ENCODE measurements at regions of chr2 and their contacts with region 1.

Region 1: DNA sequence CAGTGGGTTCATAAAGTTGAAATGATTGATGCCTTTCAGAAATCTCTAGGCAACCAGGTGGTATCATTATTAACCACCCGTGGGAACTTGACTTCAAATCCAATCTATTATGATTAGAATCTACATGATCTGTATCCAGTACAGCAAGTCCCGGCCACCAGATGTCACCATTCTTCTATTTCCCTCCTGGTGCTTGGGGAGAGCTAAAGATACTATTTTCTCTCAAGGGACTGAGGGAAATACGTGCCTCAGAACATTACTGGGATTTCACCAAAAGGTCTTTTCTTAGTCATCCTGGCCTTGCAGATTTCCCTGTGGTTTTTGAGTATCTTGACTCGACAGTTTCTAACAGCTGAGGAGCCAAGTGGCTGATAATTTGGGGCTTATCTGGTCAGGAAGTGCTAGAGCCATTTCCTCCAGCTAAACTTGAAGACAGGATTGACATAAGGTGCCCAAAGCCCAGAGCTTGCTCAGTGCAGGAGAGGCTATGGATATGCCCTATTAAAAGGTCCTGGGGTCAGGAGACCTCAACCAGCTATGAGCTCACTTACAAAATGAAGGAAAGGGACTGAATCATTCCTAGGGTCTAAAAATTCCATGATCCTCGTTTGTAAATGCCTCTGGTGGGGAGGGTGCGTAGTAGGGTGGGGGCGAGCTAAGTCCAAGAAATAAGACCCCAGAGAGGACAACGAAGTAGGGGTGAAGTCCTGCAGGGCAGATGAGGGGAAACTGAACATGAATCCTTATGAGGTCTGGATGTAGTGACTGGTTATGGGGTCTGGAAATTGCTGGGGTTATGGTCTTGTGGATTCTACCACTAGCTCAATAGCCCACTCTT is 135.4 kb upstream of the MGAT5 start:
- DNase-seq: peak; percentile 96
- H3K4me3 Mint-ChIP-seq: no peak overlapping the region
- H3K27ac Mint-ChIP-seq: no peak overlapping the region
- H3K4me1 Mint-ChIP-seq: peaks cover 32% of the 10 kb centered on the region
- H3K27me3 Mint-ChIP-seq: peaks cover 3% of the 10 kb centered on the region

Region 2: DNA sequence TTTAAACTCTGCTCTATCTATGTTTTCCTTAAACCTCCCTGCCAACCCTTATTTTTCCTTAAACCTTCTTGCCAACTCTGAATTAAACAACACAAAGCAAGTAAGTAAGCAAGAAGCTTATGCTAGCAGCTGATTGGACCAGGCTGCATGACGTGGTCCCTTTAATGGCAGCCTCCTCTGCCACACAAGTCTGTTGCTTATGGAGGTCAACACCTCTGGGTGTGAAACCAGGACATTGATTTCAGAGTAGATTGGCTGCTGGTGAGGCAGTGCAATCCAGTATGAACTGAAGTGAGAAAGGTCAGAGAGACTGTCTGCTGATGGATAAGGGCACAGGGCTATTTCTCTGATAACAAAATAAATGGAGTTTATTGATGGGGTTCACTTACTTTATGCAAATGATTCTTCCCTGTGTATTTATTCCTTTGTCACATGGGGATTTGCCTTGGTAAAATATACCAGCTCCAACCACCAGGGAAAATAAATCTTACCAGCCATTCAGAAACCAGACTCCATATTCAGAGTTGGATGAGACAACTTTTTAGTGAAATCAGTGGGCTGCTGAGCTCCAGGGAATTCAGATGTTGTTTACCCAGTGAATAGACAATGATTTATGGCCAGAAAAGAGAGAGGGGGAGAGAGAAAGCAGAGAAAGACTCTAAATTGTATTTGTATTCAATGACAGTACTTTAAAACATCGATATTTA is 438.0 kb before region 1 on chr2:
- CTCF ChIA-PET with region 1: no interaction called
- intact Hi-C with region 1: no loop called
- DNase-seq: no peak
- H3K4me3 Mint-ChIP-seq: no peak overlapping the region
- H3K27ac Mint-ChIP-seq: no peak overlapping the region
- H3K4me1 Mint-ChIP-seq: no peaks in the 10 kb centered on the region
- H3K27me3 Mint-ChIP-seq: peaks cover 2% of the 10 kb centered on the region

Region 3: GRCh38 chr2:134169788-134170187 is 51.3 kb after region 1 on chr2:
- CTCF ChIA-PET with region 1: interaction called, 3 read pairs
- intact Hi-C with region 1: loop called (anchors 1 kb)
- DNase-seq: peak; percentile 45
- H3K4me3 Mint-ChIP-seq: no peak overlapping the region
- H3K27ac Mint-ChIP-seq: no peak overlapping the region
- H3K4me1 Mint-ChIP-seq: peaks cover 68% of the 10 kb centered on the region
- H3K27me3 Mint-ChIP-seq: no peaks in the 10 kb centered on the region

Region 4: GRCh38 chr2:134207564-134208209 is 89.2 kb after region 1 on chr2:
- CTCF ChIA-PET with region 1: interaction called, 66 read pairs
- intact Hi-C with region 1: no loop called
- DNase-seq: peak; percentile 81
- H3K4me3 Mint-ChIP-seq: no peak overlapping the region
- H3K27ac Mint-ChIP-seq: no peak overlapping the region
- H3K4me1 Mint-ChIP-seq: peaks cover 5% of the 10 kb centered on the region
- H3K27me3 Mint-ChIP-seq: no peaks in the 10 kb centered on the region

Region 5: DNA sequence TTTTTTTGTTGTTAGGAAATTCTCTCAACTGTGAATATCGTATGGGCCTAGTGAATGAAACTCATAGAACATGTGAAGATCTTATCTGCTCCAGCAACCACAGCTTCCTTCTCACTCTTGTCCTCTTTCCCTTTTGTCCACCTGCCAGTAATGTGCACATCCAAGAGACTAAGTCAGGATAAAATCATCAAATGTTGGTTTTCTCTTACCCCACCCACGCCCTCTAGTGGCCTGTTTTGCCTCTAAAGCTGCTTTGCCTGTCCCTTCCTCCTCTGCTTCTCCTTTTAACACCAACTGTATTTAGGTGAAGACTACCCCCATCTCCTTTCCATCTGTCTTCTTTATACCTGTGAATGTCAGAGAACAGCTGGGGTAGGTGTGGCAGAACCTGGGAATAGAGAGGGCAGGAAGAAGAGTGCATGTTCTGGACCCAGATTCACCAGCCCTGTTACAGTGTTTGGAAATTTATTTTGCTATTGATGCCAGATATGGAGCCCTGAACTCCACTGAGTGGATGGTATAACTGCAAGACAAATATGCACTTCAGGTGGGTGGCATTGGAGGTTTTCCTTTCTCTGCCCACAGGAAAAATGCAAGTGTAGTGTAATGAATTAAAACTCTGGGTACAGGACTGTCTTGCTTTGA is 127.0 kb after region 1 on chr2:
- CTCF ChIA-PET with region 1: interaction called, 48 read pairs
- intact Hi-C with region 1: loop called (anchors 1 kb)
- DNase-seq: peak; percentile 90
- H3K4me3 Mint-ChIP-seq: no peak overlapping the region
- H3K27ac Mint-ChIP-seq: no peak overlapping the region
- H3K4me1 Mint-ChIP-seq: peaks cover 68% of the 10 kb centered on the region
- H3K27me3 Mint-ChIP-seq: no peaks in the 10 kb centered on the region

Region 6: DNA sequence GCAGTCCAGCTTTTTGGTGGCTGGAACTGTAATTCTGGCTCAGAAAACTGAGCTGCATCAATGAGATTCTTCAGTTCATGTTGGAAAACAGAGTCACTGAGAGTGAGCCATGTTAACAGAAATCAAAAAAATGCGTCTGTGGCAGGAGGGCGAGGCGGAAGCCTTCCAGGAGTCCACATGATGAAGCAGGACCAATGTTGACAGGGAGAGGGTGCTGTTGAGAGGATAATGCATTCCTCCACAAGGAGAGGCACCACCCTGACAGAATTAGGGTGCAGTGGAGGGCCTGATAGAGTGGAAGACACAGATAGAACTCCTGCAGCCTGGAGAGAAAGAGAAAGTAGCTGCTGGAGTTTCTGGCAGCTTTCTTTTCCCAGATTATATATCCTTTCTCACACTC is 246.9 kb after region 1 on chr2:
- CTCF ChIA-PET with region 1: interaction called, 10 read pairs
- intact Hi-C with region 1: no loop called
- DNase-seq: no peak
- H3K4me3 Mint-ChIP-seq: no peak overlapping the region
- H3K27ac Mint-ChIP-seq: no peak overlapping the region
- H3K4me1 Mint-ChIP-seq: peaks cover 23% of the 10 kb centered on the region
- H3K27me3 Mint-ChIP-seq: no peaks in the 10 kb centered on the region

Region 7: DNA sequence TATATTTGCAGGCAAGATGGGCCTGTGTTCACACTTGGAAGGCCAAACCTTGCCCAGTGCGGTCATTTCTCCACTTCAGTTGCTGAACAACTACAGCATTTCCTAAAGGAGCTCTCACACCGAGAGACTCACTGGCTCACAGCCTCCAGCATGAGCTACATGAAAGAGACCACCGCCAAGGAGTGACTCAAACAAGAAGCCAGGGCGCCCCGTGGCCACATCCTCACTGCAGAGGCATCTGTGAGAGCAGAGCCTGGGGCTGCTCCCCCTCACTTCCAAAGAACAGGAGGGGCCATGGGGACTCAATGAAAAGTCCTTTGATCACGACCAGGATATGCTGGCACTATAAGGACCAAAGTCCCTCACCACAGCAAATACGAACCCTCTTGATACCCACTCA is 550.3 kb after region 1 on chr2:
- CTCF ChIA-PET with region 1: interaction called, 3 read pairs
- intact Hi-C with region 1: loop called (anchors 10 kb)
- DNase-seq: peak; percentile 95
- H3K4me3 Mint-ChIP-seq: no peak overlapping the region
- H3K27ac Mint-ChIP-seq: no peak overlapping the region
- H3K4me1 Mint-ChIP-seq: peaks cover 63% of the 10 kb centered on the region
- H3K27me3 Mint-ChIP-seq: peaks cover 29% of the 10 kb centered on the region

Measured in activated naive CD4-positive, alpha-beta T cell treated with anti-CD3 and anti-CD28 coated beads for 36 hours (primary cell).